PC-3 (cell line): ENCODE measurements at regions of chr4 and their contacts with region 1.

Region 1: GRCh38 chr4:177001271-177002175 is 208.8 kb upstream of the VEGFC start:
- DNase-seq: peak; percentile 62
- ATAC-seq: peak; percentile 23
- H3K4me3 ChIP-seq: no peak overlapping the region
- H3K27ac ChIP-seq: peak overlapping the region; percentile 99
- H3K4me1 ChIP-seq: peaks cover 49% of the 10 kb centered on the region
- H3K27me3 ChIP-seq: no peaks in the 10 kb centered on the region
- CTCF ChIP-seq: no peak

Region 2: GRCh38 chr4:176902710-176903323 is 98.7 kb before region 1 on chr4:
- CTCF ChIA-PET with region 1: no interaction called
- POLR2A ChIA-PET with region 1: no interaction called
- intact Hi-C with region 1: loop called (anchors 1 kb)
- DNase-seq: peak; percentile 80
- ATAC-seq: peak; percentile 69
- H3K4me3 ChIP-seq: peak overlapping the region; percentile 9; the same call in 1 of the 2 replicates
- H3K27ac ChIP-seq: peak overlapping the region; percentile 94
- H3K4me1 ChIP-seq: peaks cover 41% of the 10 kb centered on the region
- H3K27me3 ChIP-seq: no peaks in the 10 kb centered on the region
- CTCF ChIP-seq: no peak

Region 3: DNA sequence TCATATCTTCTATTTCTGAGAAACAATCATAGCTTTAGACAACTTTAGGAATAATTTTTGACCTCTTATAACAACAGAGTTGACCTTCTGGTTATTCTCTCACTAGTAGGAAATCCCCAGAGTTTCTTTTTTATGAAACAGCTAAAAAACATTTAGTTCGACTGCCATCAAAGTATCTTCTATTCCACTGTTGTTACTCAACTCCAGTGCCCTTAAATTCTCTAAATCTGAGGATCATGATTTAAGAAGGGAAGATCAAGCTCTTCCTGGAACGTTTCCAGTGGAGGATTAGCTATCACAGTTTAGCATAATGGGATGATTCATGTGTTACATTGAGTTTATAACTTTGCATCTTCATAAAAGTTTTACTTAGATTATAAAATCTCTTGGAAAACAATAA is 73.9 kb before region 1 on chr4:
- CTCF ChIA-PET with region 1: no interaction called
- POLR2A ChIA-PET with region 1: no interaction called
- intact Hi-C with region 1: loop called (anchors 5 kb)
- DNase-seq: peak; percentile 70
- ATAC-seq: peak; percentile 59
- H3K4me3 ChIP-seq: no peak overlapping the region
- H3K27ac ChIP-seq: peak overlapping the region; percentile 4
- H3K4me1 ChIP-seq: peaks cover 18% of the 10 kb centered on the region; the same call in 1 of the 2 replicates
- H3K27me3 ChIP-seq: no peaks in the 10 kb centered on the region
- CTCF ChIP-seq: no peak

Region 4: DNA sequence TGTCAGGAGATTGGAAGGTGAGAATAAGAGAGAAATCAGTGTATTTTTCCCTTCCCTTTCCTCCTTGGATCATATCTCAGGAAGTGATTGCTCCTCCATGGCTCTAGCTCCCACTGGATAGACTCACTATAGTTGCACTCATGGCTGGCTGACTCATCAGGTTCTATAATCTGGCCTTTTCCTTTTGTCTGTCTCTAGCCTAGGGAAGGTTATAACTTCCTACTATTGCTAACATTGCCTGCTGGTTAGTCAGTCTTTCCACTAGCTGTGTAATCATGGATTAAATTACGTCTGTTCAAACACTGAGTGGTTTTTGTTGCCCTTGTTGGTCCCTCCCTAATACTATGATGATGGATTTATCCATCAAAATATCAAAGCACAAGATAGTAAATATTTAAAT is 13.3 kb before region 1 on chr4:
- CTCF ChIA-PET with region 1: no interaction called
- POLR2A ChIA-PET with region 1: no interaction called
- intact Hi-C with region 1: loop called (anchors 1 kb)
- DNase-seq: peak; percentile 96
- ATAC-seq: peak; percentile 100
- H3K4me3 ChIP-seq: no peak overlapping the region
- H3K27ac ChIP-seq: peak overlapping the region; percentile 97
- H3K4me1 ChIP-seq: peaks cover 19% of the 10 kb centered on the region
- H3K27me3 ChIP-seq: no peaks in the 10 kb centered on the region
- CTCF ChIP-seq: no peak

Region 5: GRCh38 chr4:177047070-177047850 is 45.7 kb after region 1 on chr4:
- CTCF ChIA-PET with region 1: interaction called, 5 read pairs
- POLR2A ChIA-PET with region 1: no interaction called
- intact Hi-C with region 1: loop called (anchors 2 kb)
- DNase-seq: peak; percentile 78
- ATAC-seq: peak; percentile 96
- H3K4me3 ChIP-seq: no peak overlapping the region
- H3K27ac ChIP-seq: peak overlapping the region; percentile 76
- H3K4me1 ChIP-seq: peaks cover 13% of the 10 kb centered on the region
- H3K27me3 ChIP-seq: no peaks in the 10 kb centered on the region
- CTCF ChIP-seq: peak; percentile 84

Region 6: GRCh38 chr4:177064729-177065394 is 63.3 kb after region 1 on chr4:
- CTCF ChIA-PET with region 1: no interaction called
- POLR2A ChIA-PET with region 1: no interaction called
- intact Hi-C with region 1: no loop called
- DNase-seq: no peak
- ATAC-seq: no peak
- H3K4me3 ChIP-seq: no peak overlapping the region
- H3K27ac ChIP-seq: no peak overlapping the region
- H3K4me1 ChIP-seq: no peaks in the 10 kb centered on the region
- H3K27me3 ChIP-seq: no peaks in the 10 kb centered on the region
- CTCF ChIP-seq: no peak